WTC11 (cell line): ENCODE measurements at regions of chr9 and their contacts with region 1.

Region 1: DNA sequence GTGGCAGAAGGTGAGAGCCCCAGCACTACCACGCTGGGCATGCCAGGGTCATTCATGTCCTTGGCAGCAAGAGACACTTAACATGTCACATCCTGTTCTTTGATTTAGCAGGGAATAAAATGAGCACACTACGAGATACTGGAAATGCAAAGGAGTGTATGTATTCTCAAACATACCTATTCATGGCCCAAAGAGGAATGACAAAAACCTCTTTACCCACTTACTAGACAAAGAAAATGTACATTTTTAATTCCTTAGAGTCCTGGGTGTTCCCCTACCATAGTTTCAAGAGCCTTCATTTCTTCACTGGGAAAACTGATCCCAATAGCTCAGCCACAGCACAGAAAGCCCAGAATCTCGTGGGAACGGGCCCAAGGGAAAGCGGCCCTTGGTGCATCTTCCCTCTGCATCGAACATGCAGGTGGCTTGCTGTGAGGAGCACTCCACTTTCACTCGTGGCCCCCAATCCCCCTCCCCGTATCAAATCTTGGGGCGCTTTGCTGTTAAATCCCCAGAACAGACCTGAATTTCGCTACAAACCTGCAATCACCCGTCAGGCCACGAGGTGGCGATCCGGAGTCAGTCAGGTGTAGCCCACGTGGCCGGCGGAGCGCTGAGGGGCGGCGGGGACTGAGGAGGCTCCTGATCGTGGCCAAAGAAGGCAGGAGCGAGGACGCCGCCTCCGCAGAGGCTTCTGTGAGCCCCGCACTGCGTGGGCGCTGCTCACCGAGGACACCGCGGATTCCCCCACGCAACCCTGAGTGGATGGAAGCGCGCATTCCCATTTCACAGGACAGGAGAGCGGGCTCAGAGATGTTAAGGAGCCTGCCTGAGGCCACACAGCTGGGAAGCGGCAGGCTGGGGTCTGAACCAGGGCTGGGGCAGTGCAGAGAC is 91.4 kb downstream of the LMX1B start:
- DNase-seq: peak; percentile 94
- ATAC-seq: peak; percentile 43
- H3K4me3 Mint-ChIP-seq: peak overlapping the region; percentile 49
- H3K27ac Mint-ChIP-seq: no peak overlapping the region
- H3K4me1 Mint-ChIP-seq: peaks cover 17% of the 10 kb centered on the region
- H3K27me3 Mint-ChIP-seq: peaks cover 62% of the 10 kb centered on the region
- CTCF ChIP-seq: peak; percentile 78

Region 2: GRCh38 chr9:126482361-126483044 is 222.6 kb before region 1 on chr9:
- CTCF ChIA-PET with region 1: interaction called, 10 read pairs
- POLR2A ChIA-PET with region 1: no interaction called
- DNase-seq: peak; percentile 64
- ATAC-seq: peak; percentile 79
- H3K4me3 Mint-ChIP-seq: peak overlapping the region; percentile 60
- H3K27ac Mint-ChIP-seq: no peak overlapping the region
- H3K4me1 Mint-ChIP-seq: no peaks in the 10 kb centered on the region; the same call in 1 of the 2 replicates
- H3K27me3 Mint-ChIP-seq: no peaks in the 10 kb centered on the region; the same call in 1 of the 2 replicates
- CTCF ChIP-seq: no peak

Region 3: GRCh38 chr9:126599047-126599650 is 106.0 kb before region 1 on chr9:
- CTCF ChIA-PET with region 1: interaction called, 16 read pairs
- POLR2A ChIA-PET with region 1: no interaction called
- DNase-seq: peak; percentile 53
- ATAC-seq: peak; percentile 67
- H3K4me3 Mint-ChIP-seq: no peak overlapping the region
- H3K27ac Mint-ChIP-seq: no peak overlapping the region
- H3K4me1 Mint-ChIP-seq: no peaks in the 10 kb centered on the region
- H3K27me3 Mint-ChIP-seq: no peaks in the 10 kb centered on the region
- CTCF ChIP-seq: 0 out of 2 replicates have a peak, but pooled peaks have one; percentile 17

Region 4: GRCh38 chr9:126636983-126637798 is 67.9 kb before region 1 on chr9:
- CTCF ChIA-PET with region 1: interaction called, 30 read pairs
- POLR2A ChIA-PET with region 1: no interaction called
- DNase-seq: no peak
- ATAC-seq: no peak
- H3K4me3 Mint-ChIP-seq: peak overlapping the region; percentile 31; the same call in 1 of the 2 replicates
- H3K27ac Mint-ChIP-seq: no peak overlapping the region
- H3K4me1 Mint-ChIP-seq: peaks cover 26% of the 10 kb centered on the region
- H3K27me3 Mint-ChIP-seq: peaks cover 98% of the 10 kb centered on the region
- CTCF ChIP-seq: no peak

Region 5: DNA sequence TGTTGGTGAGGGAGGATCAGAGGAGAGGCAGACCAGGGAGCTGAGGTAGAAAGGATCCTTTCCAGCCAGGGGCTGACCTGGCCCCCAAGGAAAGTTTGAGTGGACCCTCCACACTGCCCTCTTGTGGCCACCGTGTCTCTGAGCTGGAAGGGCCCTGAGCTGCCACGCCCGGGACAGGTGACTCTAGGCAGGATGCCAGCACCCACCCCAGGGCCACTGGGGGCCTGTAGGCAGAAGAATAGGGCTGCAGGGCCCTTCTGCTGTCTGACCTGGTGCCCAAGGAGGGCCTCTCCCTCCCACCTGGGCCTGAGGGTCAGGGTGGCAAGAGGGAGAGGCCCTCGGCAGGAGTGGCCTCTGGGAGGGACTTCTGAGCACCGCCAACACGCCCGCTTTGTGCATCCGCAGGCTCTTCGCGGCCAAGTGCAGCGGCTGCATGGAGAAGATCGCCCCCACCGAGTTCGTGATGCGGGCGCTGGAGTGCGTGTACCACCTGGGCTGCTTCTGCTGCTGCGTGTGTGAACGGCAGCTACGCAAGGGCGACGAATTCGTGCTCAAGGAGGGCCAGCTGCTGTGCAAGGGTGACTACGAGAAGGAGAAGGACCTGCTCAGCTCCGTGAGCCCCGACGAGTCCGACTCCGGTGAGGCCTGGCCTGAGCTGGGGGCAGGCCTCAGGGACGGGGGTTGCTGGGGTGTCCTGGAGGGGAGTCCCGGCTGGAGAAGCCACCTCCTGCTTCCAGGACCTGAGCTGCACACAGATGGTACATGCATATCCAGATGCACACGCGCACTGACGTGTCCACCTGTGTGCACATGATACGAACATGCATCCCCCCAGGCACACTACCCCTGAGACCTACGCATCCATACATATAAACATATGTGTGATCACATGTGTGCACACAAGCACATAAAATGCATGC is 14.4 kb before region 1 on chr9:
- CTCF ChIA-PET with region 1: interaction called, 68 read pairs
- POLR2A ChIA-PET with region 1: no interaction called
- DNase-seq: peak; percentile 86
- ATAC-seq: peak; percentile 82
- H3K4me3 Mint-ChIP-seq: no peak overlapping the region
- H3K27ac Mint-ChIP-seq: no peak overlapping the region
- H3K4me1 Mint-ChIP-seq: peaks cover 19% of the 10 kb centered on the region
- H3K27me3 Mint-ChIP-seq: peaks cover 42% of the 10 kb centered on the region
- CTCF ChIP-seq: peak; percentile 80

Region 6: GRCh38 chr9:126752376-126752775 is 47.3 kb after region 1 on chr9:
- CTCF ChIA-PET with region 1: interaction called, 24 read pairs
- POLR2A ChIA-PET with region 1: no interaction called
- DNase-seq: no peak
- ATAC-seq: peak; percentile 56
- H3K4me3 Mint-ChIP-seq: no peak overlapping the region
- H3K27ac Mint-ChIP-seq: no peak overlapping the region
- H3K4me1 Mint-ChIP-seq: peaks cover 3% of the 10 kb centered on the region; the same call in 1 of the 2 replicates
- H3K27me3 Mint-ChIP-seq: peaks cover 12% of the 10 kb centered on the region
- CTCF ChIP-seq: no peak

Region 7: DNA sequence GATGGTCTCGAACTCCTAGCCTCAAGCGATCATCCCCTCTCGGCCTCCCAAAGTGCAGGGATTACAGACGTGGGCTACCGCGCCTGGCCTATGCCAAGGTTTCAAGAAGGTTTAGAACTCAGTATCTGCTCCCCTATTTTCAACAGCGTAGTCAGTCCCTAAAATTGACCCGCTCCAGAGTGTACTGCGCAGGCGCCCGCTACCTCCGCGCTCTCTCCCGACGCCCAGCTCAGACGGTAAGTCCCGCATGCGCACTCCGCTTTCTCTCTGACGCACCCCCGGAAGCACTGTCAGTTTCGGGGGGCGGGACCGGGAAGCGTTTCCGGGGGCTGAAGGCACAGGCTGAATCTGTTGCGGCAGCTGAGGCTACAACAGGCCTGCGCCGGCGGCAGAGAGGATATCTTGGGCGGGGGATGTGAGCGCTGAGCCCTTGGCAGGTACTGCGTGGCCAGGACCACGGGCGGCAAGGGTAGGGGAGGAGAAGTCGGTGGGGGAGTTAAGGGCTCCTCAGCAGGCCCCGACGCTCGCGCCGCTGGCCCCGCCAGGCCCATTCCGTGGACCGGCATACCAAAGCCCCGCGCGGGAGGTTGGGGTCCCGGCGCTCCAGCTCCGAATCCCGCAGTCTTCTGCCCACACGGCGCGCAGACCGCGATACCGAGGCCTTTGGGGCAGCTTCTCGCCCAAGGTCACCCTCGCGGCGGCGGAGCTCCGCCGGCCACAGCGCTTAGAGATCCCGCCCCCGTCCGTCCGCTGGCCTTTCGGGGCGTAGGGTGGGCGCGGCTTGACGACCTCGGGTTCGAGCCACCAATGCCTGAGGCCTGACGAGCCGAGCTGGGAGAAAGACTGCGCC is 99.8 kb after region 1 on chr9 and contains the start of gene ZBTB43:
- CTCF ChIA-PET with region 1: interaction called, 22 read pairs
- POLR2A ChIA-PET with region 1: no interaction called
- DNase-seq: peak; percentile 98
- ATAC-seq: peak; percentile 95
- H3K4me3 Mint-ChIP-seq: peak within 1 kb of the TSS; percentile 95
- H3K27ac Mint-ChIP-seq: peak within 1 kb of the TSS; percentile 98
- H3K4me1 Mint-ChIP-seq: peaks cover 13% of the 10 kb centered on the region
- H3K27me3 Mint-ChIP-seq: peaks cover 12% of the 10 kb centered on the region
- CTCF ChIP-seq: no peak
- total RNA-seq, gene ZBTB43: 13.6 to 23.8 TPM (median 14.7 TPM) in 3 replicates